ENCODE measurements at regions of chr16 and their contacts with region 1.

Region 1: DNA sequence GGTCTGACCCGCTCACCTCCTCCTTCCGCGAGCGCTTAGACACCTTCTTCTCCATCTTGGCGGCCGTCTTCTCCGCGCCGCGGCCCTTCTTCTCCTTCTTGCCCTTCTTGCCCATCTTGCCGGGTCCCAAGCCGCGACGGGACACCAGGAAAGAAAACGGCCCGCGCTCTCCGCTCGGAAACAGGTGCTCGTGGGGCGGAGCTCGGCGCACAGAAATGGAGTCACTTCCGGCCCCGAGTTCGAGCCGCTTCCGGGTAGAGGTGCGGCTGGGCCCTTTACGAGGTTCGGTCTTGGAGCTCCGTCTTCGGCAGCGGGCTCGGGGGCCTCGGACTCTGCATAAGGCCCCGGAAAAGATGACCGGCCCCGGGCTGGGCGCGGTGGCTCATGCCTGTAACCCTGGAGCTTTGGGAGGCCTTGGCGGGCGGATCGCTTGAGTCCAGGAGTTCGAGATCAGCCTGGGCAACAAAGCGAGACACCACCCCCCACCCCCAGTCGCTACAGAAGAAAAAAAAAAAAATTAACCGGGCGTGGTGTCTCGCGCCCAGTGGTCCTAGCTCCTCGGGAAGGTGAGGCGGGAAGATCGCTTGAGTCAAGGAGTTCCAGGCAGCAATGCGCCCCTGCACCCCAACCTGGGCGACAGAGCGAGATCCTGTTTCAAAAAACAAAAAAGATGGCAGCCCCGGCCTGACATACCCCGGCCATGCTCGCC is at the start of gene KLHDC4:
- DNase-seq: peak; percentile 95
- ATAC-seq: peak; percentile 94
- total RNA-seq, gene KLHDC4: 10.0 TPM

Region 2: GRCh38 chr16:87391950-87392822 is 373.7 kb before region 1 on chr16 and contains the start of gene MAP1LC3B:
- intact Hi-C with region 1: loop called (anchors 5 kb)
- DNase-seq: peak; percentile 98
- ATAC-seq: peak; percentile 94
- total RNA-seq, gene MAP1LC3B: 125 TPM

Region 3: DNA sequence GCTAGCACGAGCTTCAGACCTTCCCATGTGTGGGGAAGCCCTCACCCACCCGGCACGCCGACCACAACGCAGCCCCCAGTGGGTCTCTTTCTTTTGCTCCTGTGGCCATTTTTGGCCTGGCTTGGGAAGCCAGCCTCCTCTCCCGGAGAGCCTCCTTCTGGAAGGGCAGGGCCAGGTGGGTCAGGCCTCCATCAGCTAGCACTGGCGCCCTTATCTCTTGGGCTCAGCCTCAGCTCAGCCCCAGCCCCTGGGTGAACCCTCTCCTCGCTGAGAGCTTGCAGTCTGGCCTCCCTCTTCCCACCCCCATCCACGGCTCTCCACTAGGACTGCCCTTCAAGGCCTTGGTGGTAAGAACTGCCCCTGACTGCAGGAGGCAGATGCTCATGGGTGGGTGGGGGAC is 178.3 kb before region 1 on chr16:
- intact Hi-C with region 1: loop called (anchors 1 kb)
- DNase-seq: peak; percentile 37
- ATAC-seq: no peak